Esophagus muscularis mucosa (tissue), 4 donors: ENCODE measurements at regions of chr1 and their contacts with region 1.

Region 1: GRCh38 chr1:113375878-113376277 is 14.4 kb upstream of the MAGI3 start:
- DNase-seq: no peak
- H3K4me3 ChIP-seq: peak overlapping the region; percentile 13 to 47 (median 21)
- H3K27ac ChIP-seq: peak overlapping the region in 2 of 4 donors; percentile 4 to 17
- H3K4me1 ChIP-seq: peaks cover 0 to 11% (median 8%) of the 10 kb centered on the region in 4 donors
- H3K27me3 ChIP-seq: no peaks in the 10 kb centered on the region
- CTCF ChIP-seq: no peak
- EP300 ChIP-seq: no peak
- POLR2A ChIP-seq: no peak

Region 2: GRCh38 chr1:113307771-113308445 is 68.0 kb before region 1 on chr1:
- intact Hi-C with region 1: no loop called
- DNase-seq: no peak
- H3K4me3 ChIP-seq: no peak overlapping the region
- H3K27ac ChIP-seq: no peak overlapping the region
- H3K4me1 ChIP-seq: no peaks in the 10 kb centered on the region
- H3K27me3 ChIP-seq: no peaks in the 10 kb centered on the region
- CTCF ChIP-seq: no peak
- EP300 ChIP-seq: no peak
- POLR2A ChIP-seq: no peak

Region 3: GRCh38 chr1:113452921-113453770 is 77.3 kb after region 1 on chr1:
- intact Hi-C with region 1: no loop called
- DNase-seq: no peak
- H3K4me3 ChIP-seq: no peak overlapping the region
- H3K27ac ChIP-seq: peak overlapping the region in 1 of 4 donors; percentile 40
- H3K4me1 ChIP-seq: peaks cover 4 to 48% (median 42%) of the 10 kb centered on the region in 4 donors
- H3K27me3 ChIP-seq: no peaks in the 10 kb centered on the region
- CTCF ChIP-seq: peak; percentile 15 to 30 (median 15)
- EP300 ChIP-seq: no peak
- POLR2A ChIP-seq: no peak

Region 4: DNA sequence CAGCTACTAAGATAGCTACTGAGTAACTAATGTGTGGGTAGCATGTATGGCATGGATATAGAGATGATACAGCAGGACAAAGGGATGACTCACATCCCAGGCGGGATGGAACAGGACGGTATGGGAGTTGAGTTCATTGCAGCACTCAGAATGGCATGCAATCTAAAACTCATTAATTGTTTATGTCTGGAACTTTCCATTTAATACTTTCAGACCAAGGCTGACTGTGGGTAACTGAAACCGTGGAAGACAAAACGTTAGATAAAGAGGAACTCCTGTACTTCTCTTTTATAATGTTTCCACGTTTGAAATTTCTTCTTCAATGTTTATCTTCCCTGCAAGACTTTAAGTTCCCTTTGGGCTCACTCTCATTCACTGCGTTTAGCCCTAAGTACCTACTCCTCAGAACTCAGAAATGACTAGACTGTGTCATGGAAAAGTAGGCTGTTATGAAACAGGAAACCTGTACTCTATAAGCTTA is 166.4 kb after region 1 on chr1:
- intact Hi-C with region 1: no loop called
- DNase-seq: no peak
- H3K4me3 ChIP-seq: no peak overlapping the region
- H3K27ac ChIP-seq: peak overlapping the region; percentile 40 to 65 (median 56)
- H3K4me1 ChIP-seq: peaks cover 0 to 45% (median 14%) of the 10 kb centered on the region in 4 donors
- H3K27me3 ChIP-seq: no peaks in the 10 kb centered on the region
- CTCF ChIP-seq: no peak
- EP300 ChIP-seq: no peak
- POLR2A ChIP-seq: no peak

Region 5: GRCh38 chr1:113684153-113684541 is 308.3 kb after region 1 on chr1:
- intact Hi-C with region 1: loop called (anchors 10 kb)
- DNase-seq: no peak
- H3K4me3 ChIP-seq: no peak overlapping the region
- H3K27ac ChIP-seq: peak overlapping the region; percentile 50 to 58 (median 58)
- H3K4me1 ChIP-seq: peaks cover 0 to 15% (median 9%) of the 10 kb centered on the region in 4 donors
- H3K27me3 ChIP-seq: no peaks in the 10 kb centered on the region
- CTCF ChIP-seq: no peak
- EP300 ChIP-seq: no peak
- POLR2A ChIP-seq: no peak